MCF 10A (cell line): ENCODE measurements at regions of chr1 and their contacts with region 1.

Region 1: GRCh38 chr1:221886743-221887413 is 145.0 kb upstream of the DUSP10 start:
- DNase-seq: peak; percentile 99
- H3K4me3 Mint-ChIP-seq: peak overlapping the region; percentile 55
- H3K27ac Mint-ChIP-seq: peak overlapping the region; percentile 85
- H3K4me1 Mint-ChIP-seq: peaks cover 60% of the 10 kb centered on the region
- H3K27me3 Mint-ChIP-seq: no peaks in the 10 kb centered on the region
- CTCF ChIP-seq: peak; percentile 11

Region 2: DNA sequence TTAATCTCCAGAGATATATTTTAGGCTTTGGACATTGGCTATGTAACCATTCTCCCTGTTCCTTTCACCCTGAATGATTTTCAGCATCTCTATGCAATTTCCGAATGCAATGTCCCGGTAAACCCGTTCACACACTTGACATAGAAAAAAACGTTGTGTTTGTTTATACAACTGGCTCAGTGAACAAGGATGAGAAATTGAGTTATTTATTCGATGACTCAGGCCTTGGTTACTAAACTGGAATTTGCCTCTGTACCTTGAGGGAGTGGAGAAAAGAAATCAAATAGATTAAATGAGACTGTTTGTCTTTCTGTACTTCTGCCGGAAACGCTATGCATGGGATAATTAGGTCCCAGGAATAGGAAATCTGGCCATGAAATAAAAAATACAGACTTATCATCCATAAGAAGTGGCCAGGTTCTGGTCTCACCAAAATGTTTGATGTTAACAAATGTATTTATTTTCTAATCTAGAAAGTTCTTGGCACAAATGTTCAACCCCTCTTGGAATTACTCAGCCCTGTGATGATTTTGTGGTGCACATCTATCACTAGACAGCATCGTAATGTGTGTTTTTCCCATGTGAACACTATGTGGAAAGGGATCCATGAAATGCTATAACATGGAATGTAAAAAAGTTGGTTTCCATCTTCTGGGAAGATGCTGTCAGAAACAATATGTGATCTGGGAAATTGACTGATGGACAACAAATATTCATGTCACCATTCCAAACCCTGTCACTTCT is 398.9 kb before region 1 on chr1:
- CTCF ChIA-PET with region 1: interaction called, 3 read pairs
- POLR2A ChIA-PET with region 1: no interaction called
- intact Hi-C with region 1: loop called (anchors 1 kb)
- DNase-seq: peak; percentile 94
- H3K4me3 Mint-ChIP-seq: no peak overlapping the region
- H3K27ac Mint-ChIP-seq: peak overlapping the region; percentile 83
- H3K4me1 Mint-ChIP-seq: peaks cover 23% of the 10 kb centered on the region
- H3K27me3 Mint-ChIP-seq: no peaks in the 10 kb centered on the region
- CTCF ChIP-seq: no peak

Region 3: GRCh38 chr1:221829327-221830015 is 57.4 kb before region 1 on chr1:
- CTCF ChIA-PET with region 1: interaction called, 17 read pairs
- POLR2A ChIA-PET with region 1: interaction called, 46 read pairs
- intact Hi-C with region 1: no loop called
- DNase-seq: peak; percentile 96
- H3K4me3 Mint-ChIP-seq: peak overlapping the region; percentile 5
- H3K27ac Mint-ChIP-seq: peak overlapping the region; percentile 79
- H3K4me1 Mint-ChIP-seq: peaks cover 69% of the 10 kb centered on the region
- H3K27me3 Mint-ChIP-seq: no peaks in the 10 kb centered on the region
- CTCF ChIP-seq: no peak

Region 4: GRCh38 chr1:221858818-221859611 is 27.9 kb before region 1 on chr1:
- CTCF ChIA-PET with region 1: interaction called, 14 read pairs
- POLR2A ChIA-PET with region 1: interaction called, 9 read pairs
- intact Hi-C with region 1: loop called (anchors 2 kb)
- DNase-seq: peak; percentile 95
- H3K4me3 Mint-ChIP-seq: no peak overlapping the region
- H3K27ac Mint-ChIP-seq: peak overlapping the region; percentile 68
- H3K4me1 Mint-ChIP-seq: peaks cover 14% of the 10 kb centered on the region
- H3K27me3 Mint-ChIP-seq: no peaks in the 10 kb centered on the region
- CTCF ChIP-seq: no peak

Region 5: DNA sequence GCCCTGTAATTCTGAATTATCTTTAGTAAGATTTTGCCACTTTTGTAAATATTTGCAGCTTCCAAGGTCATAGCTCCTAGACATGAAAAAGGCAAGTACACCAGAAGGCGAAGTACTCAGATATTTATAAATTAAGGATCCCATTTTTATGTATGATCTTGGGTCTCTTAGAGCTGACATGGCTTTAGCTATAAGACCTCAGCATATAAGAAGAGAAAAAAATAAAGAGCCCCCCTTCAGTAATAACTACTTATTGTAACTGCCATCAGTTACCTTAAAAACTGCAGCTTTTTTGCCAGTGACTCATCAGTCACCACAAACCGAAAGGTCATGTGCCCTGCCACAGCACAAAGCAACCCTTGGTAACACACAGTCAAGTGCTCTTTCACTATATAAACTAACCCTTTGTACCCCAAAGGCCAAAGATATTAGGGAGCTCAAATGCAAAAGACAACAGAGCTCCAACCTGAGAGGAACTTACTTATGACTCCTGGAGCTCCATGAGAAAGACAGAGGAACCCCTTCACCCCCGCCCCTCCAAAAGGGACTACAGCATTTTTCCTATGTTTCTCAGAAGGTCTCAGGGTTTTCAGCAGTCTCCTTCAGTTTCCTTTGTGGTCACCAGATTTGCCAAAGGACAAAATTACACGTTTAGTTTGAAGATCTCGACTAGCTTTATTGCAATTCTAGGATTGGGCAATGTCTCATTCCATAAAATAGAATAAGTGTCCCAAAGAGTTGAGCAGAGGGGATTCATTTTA is 74.8 kb after region 1 on chr1:
- CTCF ChIA-PET with region 1: interaction called, 4 read pairs
- POLR2A ChIA-PET with region 1: interaction called, 11 read pairs
- intact Hi-C with region 1: no loop called
- DNase-seq: peak; percentile 76
- H3K4me3 Mint-ChIP-seq: peak overlapping the region; percentile 0
- H3K27ac Mint-ChIP-seq: peak overlapping the region; percentile 52
- H3K4me1 Mint-ChIP-seq: peaks cover 23% of the 10 kb centered on the region
- H3K27me3 Mint-ChIP-seq: no peaks in the 10 kb centered on the region
- CTCF ChIP-seq: no peak

Region 6: DNA sequence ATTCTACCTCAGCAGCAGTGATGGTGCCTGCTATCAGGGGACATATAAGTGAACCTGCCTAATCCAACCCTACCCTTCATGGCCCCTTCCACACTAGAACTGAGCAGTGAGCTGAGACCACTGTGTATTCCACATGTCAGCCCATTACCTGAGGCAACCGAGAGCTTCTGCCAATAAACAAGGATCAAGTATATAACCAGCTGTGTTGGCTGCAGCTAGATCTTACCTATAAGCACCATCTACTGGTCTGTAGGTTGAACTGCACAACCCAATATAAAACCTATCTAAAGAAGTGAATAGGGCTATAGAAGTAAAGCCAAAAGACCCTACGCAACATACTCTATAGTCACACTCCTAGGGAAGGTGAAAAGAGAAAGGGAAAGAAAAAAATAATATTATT is 284.1 kb after region 1 on chr1:
- CTCF ChIA-PET with region 1: interaction called, 5 read pairs
- POLR2A ChIA-PET with region 1: interaction called, 5 read pairs
- intact Hi-C with region 1: loop called (anchors 2 kb)
- DNase-seq: peak; percentile 67
- H3K4me3 Mint-ChIP-seq: no peak overlapping the region
- H3K27ac Mint-ChIP-seq: no peak overlapping the region
- H3K4me1 Mint-ChIP-seq: peaks cover 16% of the 10 kb centered on the region
- H3K27me3 Mint-ChIP-seq: no peaks in the 10 kb centered on the region
- CTCF ChIP-seq: peak; percentile 86

Region 7: DNA sequence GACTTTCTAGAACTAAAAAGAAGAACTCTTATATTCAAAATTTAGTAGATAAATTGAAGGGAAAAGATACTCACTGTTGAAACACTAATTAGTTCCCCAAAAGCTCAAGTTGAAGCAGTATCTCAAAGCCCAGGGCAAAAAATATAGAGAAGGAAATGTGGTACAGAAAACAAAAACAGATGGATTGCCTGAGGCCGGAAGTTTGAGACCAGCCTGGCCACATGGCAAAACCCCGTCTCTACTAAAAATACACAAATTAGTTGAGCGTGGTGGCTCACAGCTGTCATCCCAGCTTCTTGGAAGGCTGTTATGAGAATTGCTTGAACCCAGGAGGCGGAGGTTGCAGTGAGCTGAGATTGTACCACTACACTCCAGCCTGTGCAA is 886.1 kb after region 1 on chr1:
- CTCF ChIA-PET with region 1: no interaction called
- POLR2A ChIA-PET with region 1: no interaction called
- intact Hi-C with region 1: no loop called
- DNase-seq: no peak
- H3K4me3 Mint-ChIP-seq: no peak overlapping the region
- H3K27ac Mint-ChIP-seq: no peak overlapping the region
- H3K4me1 Mint-ChIP-seq: peaks cover 31% of the 10 kb centered on the region
- H3K27me3 Mint-ChIP-seq: no peaks in the 10 kb centered on the region
- CTCF ChIP-seq: no peak